ENCODE measurements at regions of chr14 and their contacts with region 1.

Region 1: GRCh38 chr14:80954687-80955299 is 628 bp upstream of the TSHR start:
- DNase-seq: peak; percentile 80
- ATAC-seq: peak; percentile 70
- H3K4me3 Mint-ChIP-seq: peak overlapping the region; percentile 74
- H3K27ac Mint-ChIP-seq: peak overlapping the region; percentile 68
- H3K4me1 Mint-ChIP-seq: peaks cover 39% of the 10 kb centered on the region
- H3K27me3 Mint-ChIP-seq: peaks cover 8% of the 10 kb centered on the region
- CTCF ChIP-seq: peak; percentile 91

Region 2: DNA sequence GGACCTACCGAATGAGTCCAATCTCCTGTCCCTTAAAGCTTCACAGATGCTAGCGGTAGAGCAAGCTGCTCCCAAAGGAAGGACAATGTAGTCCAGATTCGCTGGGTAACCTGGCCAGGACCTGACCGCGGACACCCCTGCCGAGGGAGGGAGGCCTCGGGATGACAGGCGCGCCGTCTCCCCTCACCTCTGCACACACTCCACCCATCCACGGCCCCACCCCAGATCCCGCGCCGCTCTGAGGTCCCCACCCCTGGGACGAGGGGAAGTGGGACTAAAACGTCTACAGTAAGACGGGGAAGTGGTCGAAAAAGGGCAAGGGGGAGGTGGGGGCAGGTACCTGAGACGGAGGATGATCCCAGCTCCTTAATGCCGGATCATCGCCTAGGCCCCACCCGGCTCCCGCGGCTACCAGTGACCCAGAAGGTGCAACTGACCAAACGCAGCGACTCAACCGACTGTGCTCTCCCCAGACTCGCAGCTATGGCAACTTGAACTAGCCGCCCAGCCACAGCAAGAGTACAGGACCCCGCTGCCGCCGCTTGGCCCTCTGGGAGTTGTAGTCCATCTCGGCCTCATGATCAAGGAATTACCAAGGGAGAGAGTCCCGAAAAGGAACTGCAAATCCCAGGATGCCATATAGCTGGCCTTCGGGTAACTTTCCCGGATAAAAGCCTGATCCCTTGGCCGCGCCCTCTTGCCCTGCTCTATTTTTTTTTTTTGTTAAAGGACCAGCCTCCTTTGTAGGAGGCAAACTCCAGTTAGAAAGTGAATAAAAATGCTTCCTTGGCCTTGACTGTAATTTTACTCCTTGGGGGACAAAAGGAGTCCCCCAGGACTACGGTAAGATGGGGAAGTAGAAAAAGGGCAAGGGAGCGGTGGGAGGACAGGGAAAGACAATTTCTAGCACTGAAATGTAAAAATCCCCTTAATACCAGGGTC is 13.3 kb before region 1 on chr14 and contains the start of gene CEP128:
- CTCF ChIA-PET with region 1: interaction called, 11 read pairs
- POLR2A ChIA-PET with region 1: interaction called, 12 read pairs
- intact Hi-C with region 1: no loop called
- DNase-seq: peak; percentile 94
- ATAC-seq: peak; percentile 89
- H3K4me3 Mint-ChIP-seq: peak within 1 kb of the TSS; percentile 90
- H3K27ac Mint-ChIP-seq: peak within 1 kb of the TSS; percentile 98
- H3K4me1 Mint-ChIP-seq: peaks cover 30% of the 10 kb centered on the region
- H3K27me3 Mint-ChIP-seq: no peaks in the 10 kb centered on the region
- CTCF ChIP-seq: no peak
- total RNA-seq, gene CEP128: 21.6 to 22.5 TPM

Region 3: GRCh38 chr14:80987235-80988032 is 32.6 kb after region 1 on chr14:
- CTCF ChIA-PET with region 1: interaction called, 194 read pairs
- POLR2A ChIA-PET with region 1: interaction called, 3 read pairs
- intact Hi-C with region 1: loop called (anchors 1 kb)
- DNase-seq: peak; percentile 76
- ATAC-seq: peak; percentile 45
- H3K4me3 Mint-ChIP-seq: no peak overlapping the region
- H3K27ac Mint-ChIP-seq: no peak overlapping the region
- H3K4me1 Mint-ChIP-seq: no peaks in the 10 kb centered on the region
- H3K27me3 Mint-ChIP-seq: peaks cover 9% of the 10 kb centered on the region
- CTCF ChIP-seq: peak; percentile 96

Region 4: GRCh38 chr14:81164167-81164774 is 209.5 kb after region 1 on chr14:
- CTCF ChIA-PET with region 1: interaction called, 4 read pairs
- POLR2A ChIA-PET with region 1: no interaction called
- intact Hi-C with region 1: loop called (anchors 5 kb)
- DNase-seq: peak; percentile 83
- ATAC-seq: peak; percentile 100
- H3K4me3 Mint-ChIP-seq: no peak overlapping the region
- H3K27ac Mint-ChIP-seq: no peak overlapping the region
- H3K4me1 Mint-ChIP-seq: peaks cover 14% of the 10 kb centered on the region
- H3K27me3 Mint-ChIP-seq: no peaks in the 10 kb centered on the region
- CTCF ChIP-seq: peak; percentile 74

Region 5: DNA sequence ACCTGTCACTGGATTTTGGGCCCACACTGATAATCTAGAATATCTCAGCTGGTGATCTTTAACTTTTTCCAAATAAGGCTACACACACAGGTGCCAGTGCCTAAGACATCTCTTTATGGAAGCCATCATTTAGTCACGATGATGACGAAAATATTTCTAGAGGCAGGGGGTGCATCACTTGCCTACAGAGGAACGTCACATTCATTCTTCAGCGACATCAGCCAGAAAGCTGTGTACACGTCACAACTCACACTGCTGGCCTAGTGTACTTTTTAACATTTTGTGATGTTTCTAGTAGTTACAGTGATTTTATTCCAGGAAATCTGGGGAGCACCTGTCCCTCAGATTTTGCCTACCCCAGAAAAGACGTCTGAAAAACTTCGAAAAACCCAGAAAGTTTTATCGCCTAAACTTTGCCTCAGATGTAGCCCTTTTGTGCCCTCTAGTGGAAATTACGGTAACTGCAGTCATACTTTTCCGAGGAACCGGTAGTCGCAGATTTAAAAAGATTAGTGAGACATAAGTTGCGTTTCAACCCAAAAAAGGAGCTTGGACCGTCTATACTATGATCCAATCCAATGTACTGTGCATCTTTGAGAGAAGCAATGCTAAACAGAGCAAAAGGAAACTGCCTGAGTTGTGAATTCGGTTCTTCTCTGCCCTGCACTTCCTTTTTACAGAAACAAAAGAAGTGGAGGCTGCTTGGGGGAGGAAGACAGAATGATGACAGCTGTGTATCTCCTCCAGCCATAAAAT is 509.6 kb after region 1 on chr14:
- CTCF ChIA-PET with region 1: interaction called, 3 read pairs
- POLR2A ChIA-PET with region 1: no interaction called
- intact Hi-C with region 1: loop called (anchors 10 kb)
- DNase-seq: peak; percentile 70
- ATAC-seq: peak; percentile 78
- H3K4me3 Mint-ChIP-seq: peak overlapping the region; percentile 77
- H3K27ac Mint-ChIP-seq: peak overlapping the region; percentile 85
- H3K4me1 Mint-ChIP-seq: peaks cover 6% of the 10 kb centered on the region
- H3K27me3 Mint-ChIP-seq: no peaks in the 10 kb centered on the region
- CTCF ChIP-seq: peak; percentile 81

Measured in activated CD8-positive, alpha-beta T cell treated with anti-CD3 and anti-CD28 coated beads for 36 hours (primary cell).